ENCODE measurements at regions of chr20 and their contacts with region 1.

Region 1: GRCh38 chr20:10434832-10435812 is at the start of gene SLX4IP:
- DNase-seq: peak; percentile 99
- ATAC-seq: peak; percentile 80
- H3K4me3 ChIP-seq: peak within 1 kb of the TSS; percentile 80 to 91 (median 90)
- H3K27ac ChIP-seq: peak within 1 kb of the TSS; percentile 85
- H3K4me1 ChIP-seq: peaks cover 51% of the 10 kb centered on the region
- H3K27me3 ChIP-seq: no peaks in the 10 kb centered on the region; a peak in 1 of 5 replicates
- CTCF ChIP-seq: peak; percentile 11; the same call in 1 of the 2 replicates
- EP300 ChIP-seq: peak in 1 of 2 experiments; percentile 37; a peak in 3 of 4 replicates
- POLR2A ChIP-seq: peak; percentile 72 to 92
- RAD21 ChIP-seq: peak; percentile 8; the same call in 1 of the 2 replicates
- total RNA-seq, gene SLX4IP: 7.3 and 9.5 TPM in 2 replicates

Region 2: DNA sequence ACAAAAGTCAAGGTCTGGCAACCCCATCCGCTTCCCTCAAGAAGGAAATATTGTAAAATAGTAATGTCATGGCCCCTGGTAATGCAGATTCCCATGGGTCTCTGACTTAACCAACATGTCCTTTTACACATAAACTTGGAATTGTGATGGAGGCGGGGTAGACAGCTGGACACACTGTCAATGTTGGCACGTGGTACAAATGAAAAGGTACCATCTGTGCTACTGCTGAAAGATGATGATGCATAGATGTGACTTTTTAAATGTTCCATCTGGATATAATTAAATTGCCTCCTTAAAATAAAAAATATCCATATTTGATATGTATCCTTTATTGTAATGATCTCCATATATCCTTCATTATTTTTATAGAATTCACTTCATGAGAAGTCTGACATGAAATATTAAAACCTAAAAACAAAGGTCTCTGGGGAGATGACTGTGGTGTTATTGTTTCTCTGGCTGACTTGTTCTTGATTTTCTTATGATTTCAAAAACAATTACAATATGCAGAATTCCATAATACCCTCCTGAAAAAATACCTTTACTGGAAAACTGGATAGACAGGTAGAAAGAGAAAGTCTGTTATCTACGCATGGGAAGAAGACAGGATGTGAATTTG is 105.6 kb before region 1 on chr20:
- CTCF ChIA-PET with region 1: no interaction called
- POLR2A ChIA-PET with region 1: interaction called, 16 read pairs
- in situ Hi-C with region 1: no loop called
- intact Hi-C with region 1: no loop called
- DNase-seq: no peak
- ATAC-seq: no peak
- H3K4me3 ChIP-seq: peak overlapping the region in 1 of 3 experiments; percentile 55; a peak in 1 of 6 replicates
- H3K27ac ChIP-seq: no peak overlapping the region
- H3K4me1 ChIP-seq: peaks cover 20% of the 10 kb centered on the region
- H3K27me3 ChIP-seq: no peaks in the 10 kb centered on the region
- CTCF ChIP-seq: no peak
- EP300 ChIP-seq: no peak
- POLR2A ChIP-seq: no peak
- RAD21 ChIP-seq: no peak

Region 3: DNA sequence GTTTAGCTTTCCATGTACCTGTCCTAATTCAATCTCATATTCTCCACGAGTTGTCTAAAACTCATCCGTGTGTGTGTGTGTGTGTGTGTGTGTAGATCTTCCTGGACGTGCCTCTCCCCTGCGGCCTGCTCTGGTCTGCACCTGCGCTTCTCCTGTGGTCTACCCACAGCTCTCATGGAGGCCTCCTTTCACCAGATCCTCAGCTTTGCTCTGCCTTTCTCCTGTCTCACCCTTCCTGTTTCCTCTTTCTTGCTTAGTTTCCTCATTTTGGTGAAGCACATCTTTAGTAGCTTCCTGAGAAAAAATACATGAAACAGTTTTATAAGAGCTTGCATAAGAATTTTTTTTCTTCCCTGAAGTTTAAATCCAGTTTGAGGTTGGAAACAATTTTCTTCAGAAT is 18.1 kb after region 1 on chr20:
- CTCF ChIA-PET with region 1: no interaction called
- POLR2A ChIA-PET with region 1: interaction called, 11 read pairs
- in situ Hi-C with region 1: no loop called
- intact Hi-C with region 1: no loop called
- DNase-seq: no peak
- ATAC-seq: no peak
- H3K4me3 ChIP-seq: no peak overlapping the region
- H3K27ac ChIP-seq: no peak overlapping the region
- H3K4me1 ChIP-seq: peaks cover 3% of the 10 kb centered on the region
- H3K27me3 ChIP-seq: no peaks in the 10 kb centered on the region
- CTCF ChIP-seq: no peak
- EP300 ChIP-seq: no peak
- POLR2A ChIP-seq: no peak
- RAD21 ChIP-seq: no peak

Region 4: DNA sequence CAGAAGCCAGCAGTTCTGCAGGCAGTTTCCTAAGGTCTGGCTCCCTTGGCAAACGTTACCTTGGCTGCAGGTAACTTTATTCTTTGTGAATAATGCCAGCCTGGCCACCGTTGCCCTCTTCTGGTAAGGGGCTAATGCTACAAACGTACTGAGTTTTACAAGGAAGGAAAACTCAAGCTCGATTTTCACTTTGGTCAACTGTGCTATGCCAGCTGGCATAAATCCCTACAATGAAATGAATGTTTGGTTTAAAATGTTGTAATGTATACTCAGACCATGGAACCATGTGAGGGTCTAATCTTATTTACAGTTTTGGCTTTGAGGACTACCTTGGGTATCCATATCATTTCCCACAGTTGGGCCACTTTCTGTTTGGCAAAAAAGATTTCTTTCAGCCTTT is 101.4 kb after region 1 on chr20:
- CTCF ChIA-PET with region 1: no interaction called
- POLR2A ChIA-PET with region 1: interaction called, 17 read pairs
- in situ Hi-C with region 1: loop called (anchors 5 kb)
- intact Hi-C with region 1: loop called (anchors 1 kb)
- DNase-seq: peak; percentile 61
- ATAC-seq: peak; percentile 12; the same call in 1 of the 3 replicates
- H3K4me3 ChIP-seq: peak overlapping the region in 1 of 3 experiments; percentile 6; a peak in 1 of 6 replicates
- H3K27ac ChIP-seq: peak overlapping the region; percentile 13
- H3K4me1 ChIP-seq: peaks cover 63% of the 10 kb centered on the region
- H3K27me3 ChIP-seq: no peaks in the 10 kb centered on the region
- CTCF ChIP-seq: peak; percentile 77
- EP300 ChIP-seq: no peak
- POLR2A ChIP-seq: no peak
- RAD21 ChIP-seq: peak; percentile 76

Region 5: DNA sequence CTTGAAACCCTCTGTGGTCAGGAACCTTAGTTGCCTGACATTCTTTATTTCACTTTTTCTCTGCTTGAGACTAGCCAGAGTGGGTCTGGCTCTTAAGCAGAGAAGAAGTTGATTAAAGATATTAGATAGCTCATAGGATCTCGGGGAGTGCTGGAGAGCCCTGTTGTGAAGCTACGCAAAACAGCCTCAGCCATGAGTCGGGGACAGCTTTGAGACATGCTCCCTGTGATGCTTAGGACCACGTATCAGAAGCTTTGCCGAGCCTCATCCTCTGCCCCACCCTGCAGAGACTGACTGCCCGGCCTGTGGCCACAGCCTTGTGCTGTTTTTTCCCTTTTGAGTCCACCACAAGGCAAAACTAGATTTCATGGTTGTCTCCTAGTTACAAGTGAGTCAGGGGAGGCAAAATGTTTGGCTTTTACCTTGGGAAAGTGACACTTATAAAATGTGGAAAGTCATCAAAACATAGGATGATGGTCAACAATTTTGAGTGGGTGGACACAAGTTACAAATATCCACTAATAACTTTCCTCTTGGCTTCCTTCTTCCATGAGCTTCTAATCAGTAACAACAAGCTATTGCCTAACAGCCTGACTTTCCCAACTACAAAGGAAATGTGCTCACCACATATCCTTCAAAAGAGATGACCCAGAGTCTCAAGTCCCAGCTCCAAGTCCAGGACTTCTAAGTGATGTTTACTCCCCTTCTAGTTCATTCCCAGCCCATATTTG is 130.2 kb after region 1 on chr20:
- CTCF ChIA-PET with region 1: no interaction called
- POLR2A ChIA-PET with region 1: interaction called, 35 read pairs
- in situ Hi-C with region 1: no loop called
- intact Hi-C with region 1: no loop called
- DNase-seq: peak; percentile 99
- ATAC-seq: peak; percentile 82
- H3K4me3 ChIP-seq: peak overlapping the region in 1 of 3 experiments; percentile 16; a peak in 1 of 6 replicates
- H3K27ac ChIP-seq: peak overlapping the region; percentile 97
- H3K4me1 ChIP-seq: peaks cover 62% of the 10 kb centered on the region
- H3K27me3 ChIP-seq: no peaks in the 10 kb centered on the region
- CTCF ChIP-seq: no peak
- EP300 ChIP-seq: peak; percentile 91 to 100
- POLR2A ChIP-seq: peak; percentile 24 to 49; a peak in 2 of 4 replicates
- RAD21 ChIP-seq: 0 out of 2 replicates have a peak, but pooled peaks have one; percentile 12

Region 6: GRCh38 chr20:10611357-10611756 is 176.2 kb after region 1 on chr20:
- CTCF ChIA-PET with region 1: no interaction called
- POLR2A ChIA-PET with region 1: no interaction called
- in situ Hi-C with region 1: no loop called
- intact Hi-C with region 1: no loop called
- DNase-seq: peak; percentile 44
- ATAC-seq: peak; percentile 97
- H3K4me3 ChIP-seq: no peak overlapping the region
- H3K27ac ChIP-seq: no peak overlapping the region
- H3K4me1 ChIP-seq: peaks cover under 1% of the 10 kb centered on the region
- H3K27me3 ChIP-seq: no peaks in the 10 kb centered on the region
- CTCF ChIP-seq: peak; percentile 83
- EP300 ChIP-seq: peak in 1 of 2 experiments; percentile 15; a peak in 1 of 4 replicates
- POLR2A ChIP-seq: no peak
- RAD21 ChIP-seq: peak; percentile 57

Region 7: DNA sequence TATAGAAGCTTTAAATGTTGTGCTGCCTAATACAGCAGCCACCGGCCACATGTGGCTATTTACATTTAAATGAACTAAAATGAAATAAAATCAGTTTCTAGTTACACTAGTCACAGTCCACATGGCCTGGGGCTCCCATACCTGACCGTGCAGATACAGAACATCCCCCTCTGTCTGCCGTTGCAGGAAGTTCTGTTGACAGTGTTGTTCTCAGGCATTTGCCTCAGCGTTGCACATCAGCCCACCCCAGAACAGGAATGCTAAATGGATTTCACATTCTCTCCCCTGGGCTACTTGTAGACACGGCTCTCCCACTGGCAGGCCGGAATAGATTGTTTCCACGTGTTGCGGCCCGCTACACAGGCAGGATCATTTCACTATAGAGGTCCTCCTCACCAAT is 212.3 kb after region 1 on chr20:
- CTCF ChIA-PET with region 1: no interaction called
- POLR2A ChIA-PET with region 1: no interaction called
- in situ Hi-C with region 1: loop called (anchors 10 kb)
- intact Hi-C with region 1: no loop called
- DNase-seq: peak; percentile 56
- ATAC-seq: peak; percentile 72
- H3K4me3 ChIP-seq: no peak overlapping the region
- H3K27ac ChIP-seq: no peak overlapping the region
- H3K4me1 ChIP-seq: peaks cover 7% of the 10 kb centered on the region
- H3K27me3 ChIP-seq: no peaks in the 10 kb centered on the region
- CTCF ChIP-seq: peak; percentile 59
- EP300 ChIP-seq: no peak
- POLR2A ChIP-seq: no peak
- RAD21 ChIP-seq: 0 out of 2 replicates have a peak, but pooled peaks have one; percentile 34

Region 8: GRCh38 chr20:11274141-11274594 is 839.0 kb after region 1 on chr20:
- CTCF ChIA-PET with region 1: no interaction called
- POLR2A ChIA-PET with region 1: no interaction called
- in situ Hi-C with region 1: no loop called
- intact Hi-C with region 1: loop called (anchors 10 kb)
- DNase-seq: peak; percentile 75
- ATAC-seq: peak; percentile 91
- H3K4me3 ChIP-seq: no peak overlapping the region
- H3K27ac ChIP-seq: no peak overlapping the region
- H3K4me1 ChIP-seq: no peaks in the 10 kb centered on the region
- H3K27me3 ChIP-seq: peaks cover 0 to 8% of the 10 kb centered on the region in 2 experiments; a peak in 1 of 5 replicates
- CTCF ChIP-seq: peak; percentile 91
- EP300 ChIP-seq: no peak
- POLR2A ChIP-seq: no peak
- RAD21 ChIP-seq: peak; percentile 83

Measured in HepG2 (cell line).